Naive thymus-derived CD4-positive, alpha-beta T cell (primary cell): ENCODE measurements at regions of chr11 and their contacts with region 1.

Region 1: GRCh38 chr11:33808228-33808828 is 34.0 kb upstream of the FBXO3 start:
- DNase-seq: peak; percentile 60 to 85 (median 69)
- ATAC-seq: peak; percentile 94
- H3K4me3 ChIP-seq: no peak overlapping the region
- H3K4me3 Mint-ChIP-seq: no peak overlapping the region
- H3K27ac ChIP-seq: no peak overlapping the region
- H3K27ac Mint-ChIP-seq: no peak overlapping the region
- H3K4me1 ChIP-seq: no peaks in the 10 kb centered on the region
- H3K4me1 Mint-ChIP-seq: peaks cover 0 to 4% (median 0%) of the 10 kb centered on the region in 7 donors
- H3K27me3 ChIP-seq: no peaks in the 10 kb centered on the region
- H3K27me3 Mint-ChIP-seq: peaks cover 9 to 39% (median 13%) of the 10 kb centered on the region in 5 donors

Region 2: DNA sequence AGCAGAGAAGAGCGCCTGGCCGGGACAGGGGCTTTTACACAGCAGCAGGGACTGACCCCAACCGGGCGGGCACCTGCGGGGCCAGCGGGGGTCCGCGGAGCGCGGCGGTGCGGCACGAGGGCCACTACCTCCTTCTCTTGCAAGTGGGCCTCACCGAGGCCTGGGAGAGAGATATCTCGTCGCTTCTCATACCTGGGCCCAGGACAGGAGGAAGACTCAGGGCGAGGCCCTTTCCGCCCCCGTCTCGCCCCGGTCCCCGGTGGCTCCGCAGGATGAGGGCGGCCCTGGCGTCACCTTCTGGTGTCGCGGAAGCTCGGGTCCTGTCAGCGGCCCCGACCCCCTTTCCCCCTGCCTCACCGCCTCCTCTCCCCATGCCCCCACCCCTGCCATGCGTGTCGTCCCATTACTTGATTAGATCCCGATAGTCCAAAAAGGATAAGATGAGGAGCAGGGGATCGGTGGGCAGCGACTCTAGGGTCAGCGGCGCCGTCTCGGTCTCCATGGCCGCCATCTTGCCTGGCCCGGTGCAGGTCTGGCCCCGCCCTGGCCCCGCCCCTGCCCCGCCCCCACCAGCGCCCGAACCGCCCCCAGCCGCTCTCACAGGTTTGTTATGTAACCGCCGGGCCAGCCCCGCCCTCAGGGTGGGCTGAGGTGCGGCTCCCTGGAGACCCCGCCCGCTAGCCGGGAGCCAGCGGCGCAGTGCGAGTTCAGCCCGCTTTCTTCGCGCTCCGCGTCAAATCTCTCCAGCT is 34.2 kb before region 1 on chr11 and contains the start of gene FBXO3:
- CTCF ChIA-PET with region 1: no interaction called
- POLR2A ChIA-PET with region 1: interaction called, 3 read pairs
- intact Hi-C with region 1: loop called in 1 of 2 experiments (anchors 1 kb)
- DNase-seq: peak; percentile 71 to 91 (median 88)
- ATAC-seq: peak; percentile 98
- H3K4me3 ChIP-seq: peak within 1 kb of the TSS; percentile 91
- H3K4me3 Mint-ChIP-seq: peak within 1 kb of the TSS; percentile 93 to 99 (median 97)
- H3K27ac ChIP-seq: peak within 1 kb of the TSS; percentile 83
- H3K27ac Mint-ChIP-seq: peak within 1 kb of the TSS; percentile 93 to 98 (median 96)
- H3K4me1 ChIP-seq: peaks cover 20 to 23% of the 10 kb centered on the region in 2 donors
- H3K4me1 Mint-ChIP-seq: peaks cover 33 to 58% (median 45%) of the 10 kb centered on the region in 7 donors
- H3K27me3 ChIP-seq: no peaks in the 10 kb centered on the region
- H3K27me3 Mint-ChIP-seq: peaks cover 0 to 34% (median 7%) of the 10 kb centered on the region in 5 donors
- total RNA-seq, gene FBXO3: 22.6 to 55.7 (median 47.7) TPM

Region 3: DNA sequence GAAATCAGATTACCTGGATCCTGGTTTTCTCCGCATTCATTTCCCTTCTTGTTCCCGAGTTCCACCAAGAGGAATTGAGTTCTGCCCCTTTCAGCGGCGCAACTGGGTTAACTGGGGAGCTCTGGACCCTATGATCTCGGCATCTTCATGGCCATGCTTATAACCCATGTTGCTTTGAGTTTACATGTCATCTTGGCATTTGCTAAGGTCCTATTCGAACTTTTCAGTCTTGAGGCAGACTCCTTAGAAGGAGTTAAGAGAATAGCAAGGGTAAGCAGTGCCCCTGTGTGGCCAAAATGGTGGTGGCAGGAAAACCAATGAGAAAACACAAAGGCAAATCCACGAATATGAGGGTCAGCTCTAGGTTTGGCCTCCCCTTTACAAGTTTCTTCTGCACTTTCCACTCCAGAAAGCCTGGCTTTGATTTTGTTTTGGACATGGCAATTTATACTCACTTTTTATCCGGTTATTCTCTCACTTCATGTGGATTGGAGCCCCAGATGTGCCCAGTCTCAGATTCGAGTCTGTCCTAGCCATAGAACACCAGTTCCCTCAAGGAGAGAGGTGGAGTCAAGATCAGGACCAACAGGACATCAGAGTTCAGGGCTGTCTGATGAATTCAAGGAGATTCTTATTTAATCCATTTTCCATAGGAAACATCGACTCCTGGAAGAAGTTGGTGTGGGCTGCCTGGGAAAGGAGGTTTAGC is 21.3 kb after region 1 on chr11:
- CTCF ChIA-PET with region 1: interaction called, 35 read pairs
- POLR2A ChIA-PET with region 1: no interaction called
- intact Hi-C with region 1: loop called (anchors 1 kb)
- DNase-seq: peak; percentile 20 to 61 (median 54)
- ATAC-seq: peak; percentile 89
- H3K4me3 ChIP-seq: no peak overlapping the region
- H3K4me3 Mint-ChIP-seq: peak overlapping the region; percentile 74 to 92 (median 82)
- H3K27ac ChIP-seq: no peak overlapping the region
- H3K27ac Mint-ChIP-seq: no peak overlapping the region
- H3K4me1 ChIP-seq: peaks cover 4% of the 10 kb centered on the region in 2 donors
- H3K4me1 Mint-ChIP-seq: peaks cover 2 to 7% (median 6%) of the 10 kb centered on the region in 7 donors
- H3K27me3 ChIP-seq: peaks cover 0 to 10% of the 10 kb centered on the region in 2 donors
- H3K27me3 Mint-ChIP-seq: peaks cover 45 to 68% (median 66%) of the 10 kb centered on the region in 5 donors

Region 4: DNA sequence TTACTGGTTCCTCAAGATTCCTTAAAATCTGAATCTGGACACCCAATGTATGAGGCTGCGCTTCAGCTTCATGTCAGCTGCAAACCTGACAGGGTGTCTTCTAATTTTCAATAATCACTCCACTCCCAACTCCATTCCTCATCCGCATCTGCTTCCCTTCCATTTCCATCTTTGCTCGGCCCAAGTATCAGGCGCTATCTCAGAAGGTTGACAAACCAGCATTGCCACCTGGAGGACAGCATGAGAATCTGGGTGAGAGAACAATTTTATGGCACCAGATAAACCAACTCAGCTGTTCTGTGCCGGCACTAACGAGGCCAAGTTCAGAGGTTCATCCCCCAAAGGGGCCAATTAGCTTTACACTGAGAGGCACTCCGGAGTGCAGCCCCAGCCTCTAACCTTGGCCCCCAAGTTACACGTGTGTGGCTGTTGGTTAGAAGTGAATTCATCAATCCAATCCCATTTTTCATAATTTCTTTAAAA is 162.7 kb after region 1 on chr11:
- CTCF ChIA-PET with region 1: interaction called, 3 read pairs
- POLR2A ChIA-PET with region 1: no interaction called
- intact Hi-C with region 1: loop called in 1 of 2 experiments (anchors 1 kb)
- DNase-seq: peak in 3 of 9 donors; percentile 8 to 23 (median 22)
- ATAC-seq: peak; percentile 72
- H3K4me3 ChIP-seq: no peak overlapping the region
- H3K4me3 Mint-ChIP-seq: no peak overlapping the region
- H3K27ac ChIP-seq: no peak overlapping the region
- H3K27ac Mint-ChIP-seq: no peak overlapping the region
- H3K4me1 ChIP-seq: no peaks in the 10 kb centered on the region
- H3K4me1 Mint-ChIP-seq: peaks cover 0 to 1% (median 0%) of the 10 kb centered on the region in 7 donors
- H3K27me3 ChIP-seq: no peaks in the 10 kb centered on the region
- H3K27me3 Mint-ChIP-seq: peaks cover 9 to 19% (median 12%) of the 10 kb centered on the region in 5 donors

Region 5: GRCh38 chr11:33987975-33988580 is 179.8 kb after region 1 on chr11:
- CTCF ChIA-PET with region 1: interaction called, 5 read pairs
- POLR2A ChIA-PET with region 1: no interaction called
- intact Hi-C with region 1: loop called (anchors 1 to 5 kb)
- DNase-seq: peak; percentile 41 to 78 (median 64)
- ATAC-seq: peak; percentile 88
- H3K4me3 ChIP-seq: no peak overlapping the region
- H3K4me3 Mint-ChIP-seq: no peak overlapping the region
- H3K27ac ChIP-seq: no peak overlapping the region
- H3K27ac Mint-ChIP-seq: no peak overlapping the region
- H3K4me1 ChIP-seq: no peaks in the 10 kb centered on the region
- H3K4me1 Mint-ChIP-seq: peaks cover 0 to 11% (median 9%) of the 10 kb centered on the region in 7 donors
- H3K27me3 ChIP-seq: no peaks in the 10 kb centered on the region
- H3K27me3 Mint-ChIP-seq: peaks cover 0 to 5% (median 2%) of the 10 kb centered on the region in 5 donors

Region 6: GRCh38 chr11:34284811-34285344 is 476.6 kb after region 1 on chr11:
- CTCF ChIA-PET with region 1: no interaction called
- POLR2A ChIA-PET with region 1: no interaction called
- intact Hi-C with region 1: no loop called
- DNase-seq: no peak
- ATAC-seq: no peak
- H3K4me3 ChIP-seq: no peak overlapping the region
- H3K4me3 Mint-ChIP-seq: no peak overlapping the region
- H3K27ac ChIP-seq: no peak overlapping the region
- H3K27ac Mint-ChIP-seq: no peak overlapping the region
- H3K4me1 ChIP-seq: no peaks in the 10 kb centered on the region
- H3K4me1 Mint-ChIP-seq: no peaks in the 10 kb centered on the region
- H3K27me3 ChIP-seq: no peaks in the 10 kb centered on the region
- H3K27me3 Mint-ChIP-seq: peaks cover 0 to 14% (median 0%) of the 10 kb centered on the region in 5 donors

Region 7: DNA sequence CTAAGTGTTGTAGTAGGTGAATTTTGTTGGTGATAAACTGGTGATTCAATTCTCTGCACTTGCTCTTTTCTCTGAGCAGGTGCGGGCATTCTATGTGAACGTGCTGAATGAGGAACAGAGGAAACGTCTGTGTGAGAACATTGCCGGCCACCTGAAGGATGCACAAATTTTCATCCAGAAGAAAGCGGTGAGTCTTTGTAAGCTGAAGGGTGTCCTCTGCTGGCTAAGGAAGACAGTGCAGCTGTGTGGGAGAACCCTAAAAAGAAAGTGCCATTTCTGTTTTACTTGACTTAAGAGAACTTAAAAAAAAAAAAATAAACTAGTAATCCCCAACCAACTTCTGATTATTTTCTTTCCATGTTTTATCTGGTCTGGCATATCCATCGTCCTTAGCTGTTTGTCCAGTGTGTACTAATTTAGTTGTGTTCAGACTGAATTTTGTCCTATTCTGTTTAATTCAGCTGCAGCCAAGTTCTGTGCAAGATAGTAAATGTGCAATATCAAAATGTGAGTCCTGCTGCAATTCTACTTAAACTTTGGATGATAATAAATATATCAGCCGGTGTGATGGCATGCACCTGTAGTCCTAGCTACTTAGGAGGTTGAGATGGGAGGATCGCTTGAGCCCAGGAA is 660.0 kb after region 1 on chr11:
- CTCF ChIA-PET with region 1: no interaction called
- POLR2A ChIA-PET with region 1: no interaction called
- intact Hi-C with region 1: loop called in 1 of 2 experiments (anchors 1 kb)
- DNase-seq: peak in 6 of 9 donors; percentile 9 to 48 (median 32)
- ATAC-seq: peak; percentile 71
- H3K4me3 ChIP-seq: no peak overlapping the region
- H3K4me3 Mint-ChIP-seq: no peak overlapping the region
- H3K27ac ChIP-seq: no peak overlapping the region
- H3K27ac Mint-ChIP-seq: peak overlapping the region in 3 of 9 donors; percentile 1 to 62 (median 46)
- H3K4me1 ChIP-seq: no peaks in the 10 kb centered on the region
- H3K4me1 Mint-ChIP-seq: peaks cover 0 to 11% (median 4%) of the 10 kb centered on the region in 7 donors
- H3K27me3 ChIP-seq: no peaks in the 10 kb centered on the region
- H3K27me3 Mint-ChIP-seq: no peaks in the 10 kb centered on the region

Region 8: DNA sequence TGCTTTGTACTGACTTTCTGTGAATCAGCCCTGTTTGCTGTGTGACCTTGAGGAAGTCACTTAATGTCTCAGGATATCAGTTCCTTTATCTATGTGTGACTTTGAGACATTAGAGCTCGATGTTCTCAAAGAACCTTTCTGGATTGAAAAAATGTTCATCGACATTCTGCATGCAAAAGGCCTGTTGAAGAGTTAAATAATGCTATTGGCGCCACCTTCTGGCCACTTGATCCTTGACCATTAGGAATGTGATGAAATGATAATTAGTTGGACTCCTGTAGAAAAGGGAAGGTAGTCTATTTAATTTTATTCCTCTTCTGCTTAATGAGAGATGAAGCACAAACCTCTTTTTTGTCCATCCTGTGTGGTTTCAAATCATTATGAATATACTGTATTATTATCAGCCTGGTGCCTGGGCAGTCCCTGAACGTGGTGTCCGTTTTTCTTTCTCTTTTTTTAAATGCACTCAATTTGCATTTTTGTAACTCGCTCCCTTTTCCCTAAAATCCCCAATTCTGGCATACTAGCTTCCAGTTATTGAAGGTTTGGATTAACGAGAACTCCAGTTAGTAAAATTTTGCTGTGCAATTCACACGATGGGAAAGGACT is 684.6 kb after region 1 on chr11:
- CTCF ChIA-PET with region 1: interaction called, 4 read pairs
- POLR2A ChIA-PET with region 1: no interaction called
- intact Hi-C with region 1: loop called in 1 of 2 experiments (anchors 5 kb)
- DNase-seq: peak in 3 of 9 donors; percentile 7 to 19 (median 14)
- ATAC-seq: peak; percentile 38
- H3K4me3 ChIP-seq: no peak overlapping the region
- H3K4me3 Mint-ChIP-seq: no peak overlapping the region
- H3K27ac ChIP-seq: no peak overlapping the region
- H3K27ac Mint-ChIP-seq: no peak overlapping the region
- H3K4me1 ChIP-seq: no peaks in the 10 kb centered on the region
- H3K4me1 Mint-ChIP-seq: peaks cover 0 to 3% (median 0%) of the 10 kb centered on the region in 7 donors
- H3K27me3 ChIP-seq: no peaks in the 10 kb centered on the region
- H3K27me3 Mint-ChIP-seq: peaks cover 0 to 10% (median 3%) of the 10 kb centered on the region in 5 donors